ENCODE measurements at regions of chr15 and their contacts with region 1.

Region 1: DNA sequence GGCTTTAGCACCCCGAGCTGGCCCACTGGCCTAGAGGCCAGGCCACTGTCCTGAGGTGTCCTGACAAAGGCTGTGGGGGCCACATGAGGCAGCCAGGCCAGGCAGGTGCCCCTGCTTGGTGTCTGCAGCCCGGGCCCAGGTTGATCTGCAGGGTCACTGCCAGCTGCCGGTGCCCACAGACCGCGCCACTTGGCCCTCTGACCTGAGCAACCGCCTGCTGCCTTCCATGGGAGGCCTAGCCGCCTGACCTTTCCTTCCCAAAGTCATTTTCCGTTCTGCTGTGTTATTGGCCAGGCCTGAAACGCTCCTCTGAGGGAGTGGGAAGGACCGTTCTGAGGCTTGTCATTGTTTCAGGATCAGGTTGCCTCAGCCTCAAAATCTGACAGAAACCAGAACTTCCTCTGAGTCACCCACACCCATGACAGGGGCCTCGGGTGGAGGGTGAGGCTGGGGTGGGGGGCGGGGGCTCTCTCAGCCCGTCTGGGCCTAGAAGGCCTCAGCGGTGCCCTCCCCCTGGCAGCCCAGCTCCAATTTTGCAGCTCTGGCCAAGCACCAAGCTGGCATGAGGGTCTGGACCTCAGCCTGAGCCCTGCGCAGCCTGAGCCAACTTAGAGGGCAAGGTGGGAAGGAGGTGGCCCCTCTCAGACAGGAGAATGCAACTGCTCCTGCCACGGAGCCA is 140.7 kb upstream of the MEF2A start:
- DNase-seq: peak in 8 of 9 experiments; percentile 29 to 74 (median 53)
- ATAC-seq: peak; percentile 86
- H3K4me3 ChIP-seq: no peak overlapping the region
- H3K4me3 Mint-ChIP-seq: peak overlapping the region; percentile 74
- H3K27ac ChIP-seq: peak overlapping the region; percentile 26 to 54
- H3K27ac Mint-ChIP-seq: peak overlapping the region; percentile 98
- H3K4me1 ChIP-seq: peaks cover 63% of the 10 kb centered on the region
- H3K4me1 Mint-ChIP-seq: peaks cover 68% of the 10 kb centered on the region
- H3K27me3 ChIP-seq: no peaks in the 10 kb centered on the region
- H3K27me3 Mint-ChIP-seq: no peaks in the 10 kb centered on the region
- CTCF ChIP-seq: no peak

Region 2: GRCh38 chr15:99409097-99409473 is 16.0 kb before region 1 on chr15:
- CTCF ChIA-PET with region 1: interaction called, 10 read pairs
- POLR2A ChIA-PET with region 1: no interaction called
- intact Hi-C with region 1: no loop called
- DNase-seq: peak in 5 of 9 experiments; percentile 22 to 65 (median 50)
- ATAC-seq: peak; percentile 77
- H3K4me3 ChIP-seq: no peak overlapping the region
- H3K4me3 Mint-ChIP-seq: no peak overlapping the region
- H3K27ac ChIP-seq: no peak overlapping the region
- H3K27ac Mint-ChIP-seq: no peak overlapping the region
- H3K4me1 ChIP-seq: peaks cover 20% of the 10 kb centered on the region
- H3K4me1 Mint-ChIP-seq: peaks cover 24% of the 10 kb centered on the region
- H3K27me3 ChIP-seq: no peaks in the 10 kb centered on the region
- H3K27me3 Mint-ChIP-seq: no peaks in the 10 kb centered on the region
- CTCF ChIP-seq: peak; percentile 25

Region 3: DNA sequence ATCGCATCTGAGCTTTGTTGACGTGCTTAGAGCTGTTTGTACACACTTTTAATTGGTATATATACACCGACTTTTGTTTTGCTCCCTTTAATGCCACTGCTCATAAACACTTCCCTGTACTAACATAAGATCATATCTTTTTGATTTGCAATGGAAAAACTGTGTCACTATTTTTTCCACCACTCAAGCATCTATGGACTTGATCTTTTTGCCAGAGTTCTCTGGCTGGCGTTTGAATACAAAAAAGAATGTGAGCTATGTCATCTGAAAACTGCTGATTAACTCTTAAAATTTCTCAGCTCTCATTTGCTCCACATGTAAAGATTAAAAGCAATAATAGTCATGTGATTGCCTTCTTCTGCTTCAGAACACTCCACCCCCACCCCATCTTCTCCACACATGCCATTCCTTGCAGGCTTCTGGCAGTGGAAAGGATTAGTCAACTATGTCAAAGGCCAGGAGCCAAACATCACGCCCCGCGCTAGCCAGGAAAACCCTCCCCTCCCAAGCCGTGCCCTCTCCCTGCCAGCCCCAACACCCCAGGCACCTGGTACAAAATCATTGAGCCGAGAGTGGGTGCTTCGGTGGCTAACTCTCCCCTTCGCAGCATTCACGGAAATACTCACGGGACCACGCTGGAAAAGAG is 17.3 kb after region 1 on chr15:
- CTCF ChIA-PET with region 1: interaction called, 4 read pairs
- POLR2A ChIA-PET with region 1: interaction called, 4 read pairs
- intact Hi-C with region 1: loop called in 1 of 2 experiments (anchors 2 kb)
- DNase-seq: peak in 3 of 9 experiments; percentile 1 to 9 (median 4)
- ATAC-seq: no peak
- H3K4me3 ChIP-seq: no peak overlapping the region
- H3K4me3 Mint-ChIP-seq: no peak overlapping the region
- H3K27ac ChIP-seq: no peak overlapping the region
- H3K27ac Mint-ChIP-seq: peak overlapping the region; percentile 84
- H3K4me1 ChIP-seq: peaks cover 84% of the 10 kb centered on the region
- H3K4me1 Mint-ChIP-seq: peaks cover 69% of the 10 kb centered on the region
- H3K27me3 ChIP-seq: no peaks in the 10 kb centered on the region
- H3K27me3 Mint-ChIP-seq: no peaks in the 10 kb centered on the region
- CTCF ChIP-seq: no peak

Region 4: DNA sequence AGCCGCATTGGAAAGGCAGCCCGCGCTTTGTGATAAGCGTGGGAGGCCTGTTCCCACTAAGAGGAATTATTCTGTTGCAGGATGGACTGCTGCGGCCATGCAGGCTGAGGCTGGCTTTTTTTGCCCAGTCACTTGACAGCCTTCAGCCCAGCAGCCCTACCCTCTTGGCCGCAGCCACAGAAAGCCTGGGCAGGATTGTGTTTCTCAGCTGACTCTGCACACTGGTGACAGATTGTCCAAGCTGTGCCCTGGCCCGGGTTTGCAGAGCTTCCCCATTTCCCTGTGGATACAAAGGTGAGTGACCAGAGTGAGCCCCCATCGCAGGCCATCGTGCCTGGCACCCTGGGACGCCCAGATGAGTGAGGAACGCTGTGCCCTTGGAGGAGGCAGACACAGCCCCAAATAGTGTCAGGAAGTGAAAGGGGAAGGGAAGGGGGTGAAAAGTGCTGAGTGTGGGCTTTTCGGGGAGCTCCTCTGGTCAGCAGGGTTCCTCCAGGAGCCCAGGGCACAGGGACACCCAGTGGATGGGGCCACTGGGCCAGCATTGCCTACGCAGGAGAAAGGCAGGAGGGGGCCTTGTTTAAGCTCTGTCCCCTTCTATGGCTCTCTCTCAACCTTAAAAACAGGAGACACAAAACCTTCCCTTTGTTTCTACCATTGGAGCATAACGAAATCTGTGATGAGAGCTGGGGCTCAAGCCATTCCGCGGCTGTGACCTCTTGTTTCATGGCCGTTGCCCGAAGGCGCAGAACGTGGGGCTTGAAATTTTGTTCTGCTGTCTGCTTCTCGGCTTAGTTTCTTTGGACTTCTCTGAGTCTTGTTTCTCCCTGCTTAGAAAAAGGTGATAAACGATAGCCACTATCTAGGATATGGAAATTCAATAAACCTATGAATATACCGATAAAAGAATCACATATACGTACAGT is 49.1 kb after region 1 on chr15:
- CTCF ChIA-PET with region 1: no interaction called
- POLR2A ChIA-PET with region 1: interaction called, 5 read pairs
- intact Hi-C with region 1: loop called in 1 of 2 experiments (anchors 5 kb)
- DNase-seq: no peak
- ATAC-seq: no peak
- H3K4me3 ChIP-seq: no peak overlapping the region
- H3K4me3 Mint-ChIP-seq: no peak overlapping the region
- H3K27ac ChIP-seq: no peak overlapping the region
- H3K27ac Mint-ChIP-seq: no peak overlapping the region
- H3K4me1 ChIP-seq: peaks cover 56% of the 10 kb centered on the region
- H3K4me1 Mint-ChIP-seq: peaks cover 46% of the 10 kb centered on the region
- H3K27me3 ChIP-seq: no peaks in the 10 kb centered on the region
- H3K27me3 Mint-ChIP-seq: no peaks in the 10 kb centered on the region
- CTCF ChIP-seq: no peak

Region 5: DNA sequence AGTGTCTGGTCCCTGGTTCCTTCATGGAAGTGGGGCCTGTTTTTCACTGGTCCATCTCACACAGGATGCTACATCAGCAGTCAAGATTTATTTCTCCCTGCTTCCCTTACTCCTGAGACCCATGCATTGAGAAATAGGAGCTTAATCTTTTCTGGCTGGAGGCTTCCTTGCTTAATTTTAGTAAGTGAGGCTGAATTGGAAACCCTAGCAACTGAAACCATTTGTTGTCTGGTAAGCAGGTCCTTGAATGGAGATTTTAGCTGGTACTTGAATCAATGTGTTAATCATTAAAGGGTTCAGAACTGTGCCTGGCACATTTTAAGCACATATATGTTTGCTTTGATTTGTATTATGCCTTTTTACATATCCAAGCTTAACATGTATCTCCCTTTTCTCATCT is 120.5 kb after region 1 on chr15:
- CTCF ChIA-PET with region 1: no interaction called
- POLR2A ChIA-PET with region 1: no interaction called
- intact Hi-C with region 1: no loop called
- DNase-seq: no peak
- ATAC-seq: no peak
- H3K4me3 ChIP-seq: no peak overlapping the region
- H3K4me3 Mint-ChIP-seq: no peak overlapping the region
- H3K27ac ChIP-seq: no peak overlapping the region
- H3K27ac Mint-ChIP-seq: no peak overlapping the region
- H3K4me1 ChIP-seq: no peaks in the 10 kb centered on the region
- H3K4me1 Mint-ChIP-seq: no peaks in the 10 kb centered on the region
- H3K27me3 ChIP-seq: no peaks in the 10 kb centered on the region
- H3K27me3 Mint-ChIP-seq: no peaks in the 10 kb centered on the region
- CTCF ChIP-seq: no peak

Measured in CD8-positive, alpha-beta T cell (primary cell).